Sigmoid colon (tissue), 7 donors: ENCODE measurements at regions of chr22 and their contacts with region 1.

Region 1: DNA sequence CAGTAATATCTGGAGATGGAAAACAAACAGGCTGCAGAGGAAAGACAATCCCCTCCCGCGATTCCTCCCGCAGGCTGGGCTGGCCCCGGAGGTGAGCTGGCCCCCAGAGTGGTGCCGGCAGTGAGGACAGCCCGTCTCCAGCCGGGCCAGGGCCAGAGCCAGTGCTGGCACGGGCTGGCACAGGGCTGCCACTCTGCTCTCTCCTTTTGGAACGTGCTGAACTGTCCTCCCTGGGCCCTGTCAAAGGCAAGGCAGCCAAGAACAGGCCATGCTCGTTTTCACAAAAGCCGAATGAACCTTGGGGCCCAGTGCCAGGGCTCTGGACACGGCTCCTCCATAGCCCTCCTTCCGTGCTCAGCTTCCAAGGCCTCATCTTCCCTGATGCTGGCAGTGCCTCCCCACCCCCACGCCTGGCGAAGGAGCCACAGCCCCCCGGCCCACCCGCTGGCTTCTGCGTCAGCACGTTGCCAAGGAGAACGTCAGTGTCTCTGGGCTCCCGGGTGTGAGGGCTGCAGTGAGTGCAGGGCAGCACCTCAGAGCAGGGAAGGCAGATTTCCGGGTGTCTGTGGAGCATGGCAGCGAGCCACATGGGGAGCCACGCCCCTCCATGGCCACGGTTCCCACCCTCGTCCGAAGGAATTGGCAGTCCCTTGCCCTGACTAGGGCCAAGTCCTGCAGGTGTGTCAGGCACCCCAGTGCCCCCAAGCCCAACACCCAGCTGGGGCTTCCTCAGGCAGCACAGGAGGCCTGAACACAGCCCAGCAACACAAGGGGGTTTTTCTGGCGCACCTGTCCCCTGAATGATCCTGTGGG is 28.6 kb downstream of the GNAZ start:
- DNase-seq: peak; percentile 87
- H3K4me3 ChIP-seq: peak overlapping the region in 1 of 4 donors; percentile 2
- H3K27ac ChIP-seq: peak overlapping the region; percentile 73 to 87 (median 79)
- H3K4me1 ChIP-seq: peaks cover 0 to 26% (median 22%) of the 10 kb centered on the region in 4 donors
- H3K27me3 ChIP-seq: no peaks in the 10 kb centered on the region
- CTCF ChIP-seq: no peak
- EP300 ChIP-seq: no peak
- POLR2A ChIP-seq: no peak

Region 2: DNA sequence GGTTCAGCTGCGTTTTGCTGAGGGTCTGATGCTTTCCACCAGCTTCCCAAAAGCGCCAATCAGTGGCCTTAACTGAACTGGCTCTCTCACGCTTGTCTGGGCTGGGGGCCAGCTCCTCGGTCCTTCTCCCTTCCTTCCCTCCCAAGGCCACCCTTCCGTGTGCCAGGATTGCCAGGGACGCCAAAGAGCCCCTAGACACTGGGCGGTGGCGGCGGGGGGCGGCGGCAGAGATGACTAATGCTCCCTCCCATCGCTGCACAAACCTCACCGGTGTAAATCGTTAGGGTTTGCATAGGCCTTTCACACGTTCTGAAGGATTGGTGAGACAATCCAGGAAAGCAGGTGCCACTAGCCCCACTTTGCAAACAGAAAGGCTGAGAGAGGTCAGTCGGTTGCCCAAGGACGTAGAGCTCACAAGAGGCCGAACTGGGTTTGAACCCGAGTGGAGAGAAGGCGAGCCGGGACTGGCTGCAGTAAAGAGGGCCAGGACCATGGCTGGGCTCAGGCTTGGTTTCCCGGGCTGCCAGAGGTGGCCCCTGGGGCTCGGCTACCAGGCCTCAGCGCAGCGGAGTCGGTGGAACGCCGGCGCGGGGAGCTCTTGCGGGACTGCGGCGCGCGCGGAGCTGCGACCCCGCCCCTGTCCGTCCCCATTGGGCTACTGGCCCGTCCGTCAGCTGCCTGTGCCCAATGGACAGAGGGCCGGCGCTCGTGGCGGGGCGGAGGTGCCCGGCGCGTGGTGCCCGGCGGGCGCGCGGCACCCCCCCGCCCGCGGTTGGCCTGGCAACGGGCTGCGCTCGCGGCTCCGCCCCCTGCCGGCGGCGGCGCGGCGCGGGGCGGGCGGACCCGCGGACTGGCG is 29.2 kb before region 1 on chr22:
- intact Hi-C with region 1: loop called (anchors 2 kb)
- DNase-seq: peak; percentile 95
- H3K4me3 ChIP-seq: peak overlapping the region; percentile 44 to 93 (median 76)
- H3K27ac ChIP-seq: peak overlapping the region; percentile 69 to 75 (median 73)
- H3K4me1 ChIP-seq: peaks cover 0 to 37% (median 21%) of the 10 kb centered on the region in 4 donors
- H3K27me3 ChIP-seq: no peaks in the 10 kb centered on the region
- CTCF ChIP-seq: no peak
- EP300 ChIP-seq: no peak
- POLR2A ChIP-seq: no peak

Region 3: GRCh38 chr22:23128269-23129108 is 29.6 kb after region 1 on chr22:
- intact Hi-C with region 1: no loop called
- DNase-seq: peak; percentile 78
- H3K4me3 ChIP-seq: no peak overlapping the region
- H3K27ac ChIP-seq: no peak overlapping the region
- H3K4me1 ChIP-seq: peaks cover 0 to 7% (median 5%) of the 10 kb centered on the region in 4 donors
- H3K27me3 ChIP-seq: no peaks in the 10 kb centered on the region
- CTCF ChIP-seq: peak; percentile 66 to 89 (median 72)
- EP300 ChIP-seq: no peak
- POLR2A ChIP-seq: no peak